ENCODE measurements at regions of chr1 and their contacts with region 1.

Region 1: DNA sequence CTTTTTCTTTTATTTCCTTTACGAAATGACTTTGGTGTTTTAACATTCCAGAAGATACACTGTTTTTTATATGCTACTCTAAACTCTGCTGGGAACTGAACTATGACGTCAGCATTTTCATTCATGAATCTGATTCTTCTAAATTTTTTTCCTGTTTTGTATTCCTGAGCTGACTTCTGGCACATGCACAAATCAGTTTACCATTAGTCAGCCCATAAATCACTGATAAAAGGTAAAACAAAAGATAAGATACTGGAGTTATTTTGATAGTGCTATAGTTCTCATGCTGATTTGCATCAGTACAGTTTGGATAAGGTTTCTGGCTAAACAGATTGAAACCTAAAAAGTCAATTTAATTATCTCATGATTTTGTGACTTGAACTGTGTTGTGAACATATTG is 10.4 kb downstream of the CAMTA1 start:
- DNase-seq: no peak
- H3K4me3 ChIP-seq: no peak overlapping the region
- H3K4me1 ChIP-seq: 0 out of 2 replicates have a peak, but pooled peaks cover 4% of the 10 kb centered on the region
- H3K27me3 ChIP-seq: no peaks in the 10 kb centered on the region

Region 2: GRCh38 chr1:6850537-6850936 is 54.9 kb after region 1 on chr1:
- in situ Hi-C with region 1: no loop called
- DNase-seq: no peak
- H3K4me3 ChIP-seq: no peak overlapping the region
- H3K4me1 ChIP-seq: no peaks in the 10 kb centered on the region
- H3K27me3 ChIP-seq: no peaks in the 10 kb centered on the region

Region 3: GRCh38 chr1:6880951-6881690 is 85.5 kb after region 1 on chr1:
- in situ Hi-C with region 1: loop called (anchors 5 kb)
- DNase-seq: no peak
- H3K4me3 ChIP-seq: no peak overlapping the region
- H3K4me1 ChIP-seq: peaks cover 12% of the 10 kb centered on the region
- H3K27me3 ChIP-seq: no peaks in the 10 kb centered on the region

Region 4: DNA sequence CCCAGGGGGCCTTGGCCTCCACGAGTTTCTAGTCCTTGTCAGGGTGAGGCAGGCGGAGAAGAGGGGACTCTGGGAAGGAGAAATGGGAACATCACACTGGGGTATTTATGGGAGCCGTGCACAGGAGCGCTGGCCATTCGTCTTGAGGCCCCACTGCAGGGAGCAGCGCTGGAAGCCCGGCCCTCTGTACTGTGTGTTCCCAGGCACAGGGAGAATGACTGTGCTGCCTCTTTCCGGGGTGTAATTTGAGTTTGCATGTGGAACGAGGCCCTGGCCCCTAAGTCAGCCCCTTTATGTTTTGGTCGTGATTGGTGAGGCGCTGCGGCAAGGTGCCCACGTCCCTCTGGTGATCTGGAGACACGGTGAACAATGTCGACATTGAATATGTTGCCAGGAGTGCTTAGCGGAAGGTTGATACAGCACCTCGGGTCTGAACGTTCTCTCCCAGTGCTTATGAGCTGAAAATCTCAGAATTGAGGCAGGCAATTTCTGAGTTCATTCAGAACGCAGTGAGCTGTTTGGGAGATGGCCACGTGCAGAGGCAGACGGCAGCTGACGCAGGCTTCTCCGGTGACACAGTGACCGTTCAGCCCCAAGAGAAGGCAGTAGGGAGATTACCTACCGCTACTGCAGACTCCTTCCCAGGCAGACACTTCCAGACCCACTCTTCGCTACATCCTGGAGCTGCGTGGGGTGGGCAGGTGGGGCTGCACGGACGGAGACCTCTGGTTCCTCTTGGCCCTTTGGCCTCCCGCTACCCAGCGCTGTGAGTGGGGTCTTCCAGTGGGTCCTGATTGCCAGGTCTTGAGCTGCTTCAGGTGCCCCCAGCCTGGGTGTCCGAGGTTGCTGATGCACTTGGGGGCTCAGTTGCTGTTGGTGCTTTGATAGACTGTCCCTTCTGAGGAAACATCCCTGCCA is 255.3 kb after region 1 on chr1:
- in situ Hi-C with region 1: no loop called
- DNase-seq: no peak
- H3K4me3 ChIP-seq: no peak overlapping the region
- H3K4me1 ChIP-seq: no peaks in the 10 kb centered on the region
- H3K27me3 ChIP-seq: 0 out of 2 replicates have a peak, but pooled peaks cover under 1% of the 10 kb centered on the region